Posterior cingulate gyrus (tissue), 11 donors: ENCODE measurements at regions of chr4 and their contacts with region 1.

Region 1: DNA sequence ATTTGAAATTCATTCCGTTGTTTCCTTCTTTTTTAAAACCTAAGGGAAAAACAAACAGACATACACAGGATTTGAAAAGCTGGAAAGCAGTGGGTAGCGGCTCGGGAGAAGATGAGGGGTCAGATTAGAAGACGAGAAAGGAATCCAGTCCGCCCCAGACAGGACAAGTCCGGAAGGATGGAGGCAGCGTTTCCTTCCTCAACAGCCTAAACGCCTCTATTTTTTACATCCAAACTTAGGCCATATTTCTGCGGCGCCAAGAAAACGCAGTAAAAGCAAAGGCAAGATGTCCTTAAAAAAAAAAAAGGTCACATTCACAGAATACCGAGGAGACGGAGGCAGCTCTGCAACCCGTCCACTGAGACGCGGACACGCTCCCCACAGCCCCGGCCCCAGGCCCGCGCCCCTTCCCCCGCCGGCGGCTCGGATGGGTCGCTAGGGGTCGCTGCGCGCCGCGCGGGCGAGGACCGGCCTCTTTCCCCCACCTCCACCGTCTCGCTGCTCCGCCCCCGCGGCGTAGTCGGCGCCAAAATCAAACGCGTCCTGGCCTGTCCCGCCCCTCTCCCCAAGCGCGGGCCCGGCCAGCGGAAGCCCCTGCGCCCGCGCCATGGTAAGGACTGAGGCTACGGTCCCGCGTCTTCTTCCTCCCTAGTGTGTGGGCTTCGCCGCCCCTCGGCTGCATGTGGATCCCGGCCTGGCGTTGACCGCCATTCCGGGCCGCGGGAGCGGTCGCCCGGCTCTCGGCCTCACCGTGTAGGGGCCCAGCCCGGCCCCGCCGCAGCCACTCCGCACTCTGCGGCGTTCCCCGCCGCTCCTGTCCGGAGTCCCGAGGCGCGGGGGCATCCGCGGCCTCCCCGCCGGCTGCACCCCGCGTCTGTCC is at the start of gene MND1:
- DNase-seq: peak; percentile 71 to 97 (median 84)

Region 2: GRCh38 chr4:153142700-153143438 is 201.5 kb before region 1 on chr4:
- intact Hi-C with region 1: loop called (anchors 5 kb)
- DNase-seq: peak; percentile 50 to 95 (median 76)

Region 3: DNA sequence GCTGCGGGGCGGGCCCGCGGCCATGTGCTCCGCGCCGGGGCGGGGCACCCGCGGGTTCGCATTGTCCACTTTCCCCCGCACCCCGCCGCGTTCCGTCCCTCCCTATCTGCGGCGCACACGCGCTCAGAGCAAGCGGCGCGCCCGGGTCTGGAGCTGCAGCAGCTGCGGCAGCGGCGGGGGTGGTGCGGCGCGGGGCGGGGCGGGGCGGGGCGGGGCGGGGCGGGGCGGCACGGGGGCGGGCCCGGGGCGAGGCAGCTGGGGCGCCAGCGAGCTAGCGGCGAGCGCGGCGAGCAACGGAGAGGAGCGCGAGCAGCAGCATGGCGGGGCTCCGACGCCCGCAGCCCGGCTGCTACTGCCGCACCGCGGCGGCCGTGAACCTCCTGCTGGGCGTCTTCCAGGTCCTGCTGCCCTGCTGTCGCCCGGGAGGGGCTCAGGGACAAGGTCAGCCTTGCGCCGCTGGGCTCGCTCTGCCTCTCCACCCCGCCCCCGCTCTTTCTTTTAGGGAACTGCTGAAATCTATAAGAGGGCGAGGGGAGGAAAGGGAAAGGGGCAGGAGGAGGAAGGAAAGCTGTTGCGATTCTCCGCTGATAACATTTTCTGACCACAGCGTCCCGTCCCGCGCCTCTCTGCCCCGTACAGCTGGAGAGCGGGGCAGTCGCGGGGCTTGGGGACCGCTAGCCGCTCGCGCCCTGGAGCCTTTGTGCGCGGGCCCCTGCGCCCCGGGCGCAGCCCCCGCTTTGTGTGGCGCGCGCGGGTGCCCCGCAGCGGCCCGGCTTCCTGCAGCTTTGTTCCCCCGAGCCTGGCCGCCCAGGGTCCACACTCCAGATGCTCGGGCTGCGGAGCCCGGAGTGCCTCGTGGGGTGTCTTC is 121.9 kb after region 1 on chr4 and contains the start of gene TMEM131L:
- intact Hi-C with region 1: loop called (anchors 5 kb)
- DNase-seq: peak; percentile 48 to 96 (median 60)

Region 4: DNA sequence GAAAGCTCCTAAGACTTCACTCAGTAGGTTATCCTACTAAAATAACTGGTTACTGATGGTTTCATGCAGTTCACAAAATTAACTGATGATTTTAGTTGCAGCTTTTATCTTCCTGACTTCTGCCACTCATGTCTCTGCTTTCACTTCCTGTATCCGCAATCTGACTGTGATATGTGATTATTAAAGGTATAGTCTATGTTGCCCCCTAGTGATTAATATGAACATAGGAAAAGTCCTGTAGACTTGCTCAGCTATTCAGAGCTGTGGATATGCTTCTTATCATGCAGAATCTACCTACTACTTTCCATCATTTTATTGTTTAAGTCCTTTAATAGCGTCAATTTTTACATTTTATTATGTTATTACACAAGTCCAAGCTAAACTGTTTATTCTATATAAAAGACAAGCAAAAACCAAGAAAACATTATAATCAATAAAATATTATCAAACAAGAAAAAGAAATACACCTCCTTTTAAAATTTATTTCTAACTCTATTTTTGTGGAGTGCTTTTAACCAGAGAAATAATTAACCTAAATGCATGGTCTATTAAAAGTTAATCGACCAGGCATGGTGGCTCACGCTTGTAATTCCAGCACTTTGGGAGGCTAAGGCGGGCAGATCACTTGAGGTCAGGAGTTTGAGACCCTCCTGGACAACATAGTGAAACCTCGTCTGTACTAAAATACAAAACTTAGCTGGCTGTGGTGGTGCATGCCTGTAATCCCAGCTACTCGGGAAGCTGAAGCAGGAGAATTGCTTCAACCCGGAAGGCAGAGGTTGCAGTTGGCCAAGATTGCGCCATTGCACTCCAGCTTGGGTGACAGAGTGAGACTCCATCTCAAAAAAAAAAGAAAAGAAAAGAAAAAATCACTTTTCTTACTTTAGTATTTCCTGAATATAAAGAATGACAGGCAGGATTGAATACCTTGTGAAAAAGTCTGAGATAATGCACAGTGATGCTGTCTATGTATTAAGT is 299.3 kb after region 1 on chr4:
- intact Hi-C with region 1: loop called (anchors 5 kb)
- DNase-seq: no peak

Region 5: DNA sequence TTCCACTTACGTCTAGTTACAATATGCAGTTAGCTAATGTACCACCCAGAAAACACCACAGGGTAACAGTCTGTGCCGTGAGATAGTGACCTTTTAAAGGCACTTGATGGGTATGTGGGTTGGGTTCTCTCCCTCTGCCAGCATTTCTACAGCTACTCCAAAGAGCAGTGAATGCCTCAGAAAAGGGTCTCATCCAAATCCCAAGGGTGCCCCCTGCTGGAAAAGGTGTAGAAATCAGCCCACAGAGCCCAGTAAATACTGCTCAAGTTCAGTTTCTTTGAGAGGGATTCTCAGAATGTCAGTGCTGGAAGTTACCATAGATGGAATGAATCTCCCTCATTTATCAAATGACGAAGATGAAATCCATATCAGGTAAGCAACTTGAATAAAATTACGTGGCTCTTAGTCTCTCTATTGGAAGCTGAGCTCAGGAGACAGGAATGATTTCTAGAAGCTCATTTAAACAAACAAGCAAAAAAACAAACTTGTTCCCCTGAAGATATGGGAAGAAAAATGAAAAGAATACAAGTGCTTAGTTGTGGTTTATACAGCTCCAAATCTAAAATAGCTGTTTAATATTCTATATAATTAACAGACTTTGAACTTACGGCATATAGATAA is 405.9 kb after region 1 on chr4:
- intact Hi-C with region 1: loop called (anchors 10 kb)
- DNase-seq: peak in 6 of 10 donors; percentile 31 to 90 (median 56)